Activated CD8-positive, alpha-beta T cell treated with anti-CD3 and anti-CD28 coated beads, Interleukin-2, amount 10 ng/mL, durations not matched to agents 7 days and 5 days (primary cell): ENCODE measurements at regions of chr1 and their contacts with region 1.

Region 1: GRCh38 chr1:43073490-43074230 is 98.4 kb downstream of the EBNA1BP2 start:
- DNase-seq: peak; percentile 82
- ATAC-seq: peak; percentile 86
- H3K4me3 Mint-ChIP-seq: no peak overlapping the region
- H3K27ac Mint-ChIP-seq: peak overlapping the region; percentile 17
- H3K4me1 Mint-ChIP-seq: peaks cover 6% of the 10 kb centered on the region
- H3K27me3 Mint-ChIP-seq: peaks cover 2% of the 10 kb centered on the region

Region 2: GRCh38 chr1:42784946-42785693 is 288.5 kb before region 1 on chr1 and contains the start of gene TMEM269:
- CTCF ChIA-PET with region 1: interaction called, 61 read pairs
- POLR2A ChIA-PET with region 1: no interaction called
- DNase-seq: peak; percentile 71
- ATAC-seq: peak; percentile 87
- H3K4me3 Mint-ChIP-seq: peak within 1 kb of the TSS; percentile 62
- H3K27ac Mint-ChIP-seq: peak within 1 kb of the TSS; percentile 84
- H3K4me1 Mint-ChIP-seq: peaks cover 27% of the 10 kb centered on the region
- H3K27me3 Mint-ChIP-seq: no peaks in the 10 kb centered on the region
- total RNA-seq, gene TMEM269: 0.40 TPM in 1 of 2 experiments, not detected in the other

Region 3: GRCh38 chr1:42913426-42914091 is 160.1 kb before region 1 on chr1:
- CTCF ChIA-PET with region 1: interaction called, 401 read pairs
- POLR2A ChIA-PET with region 1: interaction called, 8 read pairs
- DNase-seq: peak; percentile 77
- ATAC-seq: peak; percentile 76
- H3K4me3 Mint-ChIP-seq: no peak overlapping the region
- H3K27ac Mint-ChIP-seq: no peak overlapping the region
- H3K4me1 Mint-ChIP-seq: peaks cover 12% of the 10 kb centered on the region
- H3K27me3 Mint-ChIP-seq: peaks cover 8% of the 10 kb centered on the region

Region 4: DNA sequence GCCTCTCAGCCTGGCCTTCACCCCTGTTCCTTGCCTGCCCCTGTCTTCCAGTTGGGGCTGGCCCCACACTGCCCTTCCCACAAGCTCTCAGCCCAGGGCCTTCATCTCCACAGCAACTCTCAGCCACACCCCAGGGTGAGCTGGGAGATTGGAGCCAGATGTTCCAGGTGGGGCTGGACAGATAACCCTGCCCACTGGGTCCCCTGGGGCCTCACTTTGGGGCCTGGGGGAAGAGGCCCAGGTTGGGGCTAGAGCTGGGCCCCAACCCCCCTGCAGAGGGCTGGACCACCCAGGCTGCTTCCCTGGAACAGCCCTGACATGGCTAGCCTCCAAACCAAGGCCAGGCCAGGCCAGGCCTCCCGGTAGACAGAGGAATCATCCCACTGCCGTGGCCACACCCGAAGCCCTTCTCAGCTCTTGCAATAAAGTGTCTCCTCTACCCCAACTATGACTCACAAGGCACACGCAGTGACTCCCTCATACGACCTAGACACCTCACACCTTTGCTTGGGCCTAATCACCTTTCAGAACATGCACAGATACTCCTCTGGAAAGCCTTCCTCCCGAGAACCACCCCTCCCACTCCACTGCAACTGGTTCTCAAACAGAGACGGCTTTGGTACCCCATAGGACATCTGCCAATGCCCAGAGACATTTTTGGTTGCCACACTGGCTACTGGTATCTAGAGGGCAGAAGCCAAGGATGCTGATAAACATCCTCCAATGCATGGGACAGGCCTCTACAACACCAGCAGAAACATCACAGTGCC is 137.2 kb before region 1 on chr1:
- CTCF ChIA-PET with region 1: interaction called, 18 read pairs
- POLR2A ChIA-PET with region 1: no interaction called
- DNase-seq: no peak
- ATAC-seq: no peak
- H3K4me3 Mint-ChIP-seq: peak overlapping the region; percentile 37
- H3K27ac Mint-ChIP-seq: peak overlapping the region; percentile 97
- H3K4me1 Mint-ChIP-seq: peaks cover 97% of the 10 kb centered on the region
- H3K27me3 Mint-ChIP-seq: no peaks in the 10 kb centered on the region

Region 5: GRCh38 chr1:42971841-42972291 is 101.8 kb before region 1 on chr1:
- CTCF ChIA-PET with region 1: interaction called, 16 read pairs
- POLR2A ChIA-PET with region 1: no interaction called
- DNase-seq: no peak
- ATAC-seq: no peak
- H3K4me3 Mint-ChIP-seq: no peak overlapping the region
- H3K27ac Mint-ChIP-seq: no peak overlapping the region
- H3K4me1 Mint-ChIP-seq: no peaks in the 10 kb centered on the region
- H3K27me3 Mint-ChIP-seq: no peaks in the 10 kb centered on the region

Region 6: GRCh38 chr1:43098200-43098599 is 24.5 kb after region 1 on chr1:
- CTCF ChIA-PET with region 1: interaction called, 20 read pairs
- POLR2A ChIA-PET with region 1: no interaction called
- DNase-seq: no peak
- ATAC-seq: no peak
- H3K4me3 Mint-ChIP-seq: no peak overlapping the region
- H3K27ac Mint-ChIP-seq: no peak overlapping the region
- H3K4me1 Mint-ChIP-seq: no peaks in the 10 kb centered on the region
- H3K27me3 Mint-ChIP-seq: peaks cover 11% of the 10 kb centered on the region

Region 7: DNA sequence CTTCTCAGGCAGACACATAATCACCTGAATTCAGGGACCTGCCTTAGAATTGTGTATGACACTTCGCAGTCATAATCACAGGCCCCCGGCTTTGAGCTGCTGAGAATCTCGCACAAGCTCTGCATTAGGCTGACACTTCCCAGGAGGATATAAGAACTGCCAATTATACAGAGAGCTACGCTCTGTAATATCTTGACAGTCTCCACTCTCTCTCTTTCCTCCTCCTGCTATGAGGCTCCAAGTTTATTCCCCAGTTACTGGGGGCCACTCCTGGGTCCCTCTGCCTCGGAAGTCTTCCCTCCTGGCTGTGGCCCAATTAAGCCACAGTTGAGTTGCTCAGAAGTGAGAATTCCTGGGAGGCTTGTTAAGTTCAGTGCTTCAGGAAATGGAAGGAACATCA is 55.8 kb after region 1 on chr1:
- CTCF ChIA-PET with region 1: no interaction called
- POLR2A ChIA-PET with region 1: no interaction called
- DNase-seq: no peak
- ATAC-seq: no peak
- H3K4me3 Mint-ChIP-seq: no peak overlapping the region
- H3K27ac Mint-ChIP-seq: no peak overlapping the region
- H3K4me1 Mint-ChIP-seq: no peaks in the 10 kb centered on the region
- H3K27me3 Mint-ChIP-seq: peaks cover 28% of the 10 kb centered on the region